Activated CD8-positive, alpha-beta T cell treated with anti-CD3 and anti-CD28 coated beads for 36 hours (primary cell): ENCODE measurements at regions of chr3 and their contacts with region 1.

Region 1: DNA sequence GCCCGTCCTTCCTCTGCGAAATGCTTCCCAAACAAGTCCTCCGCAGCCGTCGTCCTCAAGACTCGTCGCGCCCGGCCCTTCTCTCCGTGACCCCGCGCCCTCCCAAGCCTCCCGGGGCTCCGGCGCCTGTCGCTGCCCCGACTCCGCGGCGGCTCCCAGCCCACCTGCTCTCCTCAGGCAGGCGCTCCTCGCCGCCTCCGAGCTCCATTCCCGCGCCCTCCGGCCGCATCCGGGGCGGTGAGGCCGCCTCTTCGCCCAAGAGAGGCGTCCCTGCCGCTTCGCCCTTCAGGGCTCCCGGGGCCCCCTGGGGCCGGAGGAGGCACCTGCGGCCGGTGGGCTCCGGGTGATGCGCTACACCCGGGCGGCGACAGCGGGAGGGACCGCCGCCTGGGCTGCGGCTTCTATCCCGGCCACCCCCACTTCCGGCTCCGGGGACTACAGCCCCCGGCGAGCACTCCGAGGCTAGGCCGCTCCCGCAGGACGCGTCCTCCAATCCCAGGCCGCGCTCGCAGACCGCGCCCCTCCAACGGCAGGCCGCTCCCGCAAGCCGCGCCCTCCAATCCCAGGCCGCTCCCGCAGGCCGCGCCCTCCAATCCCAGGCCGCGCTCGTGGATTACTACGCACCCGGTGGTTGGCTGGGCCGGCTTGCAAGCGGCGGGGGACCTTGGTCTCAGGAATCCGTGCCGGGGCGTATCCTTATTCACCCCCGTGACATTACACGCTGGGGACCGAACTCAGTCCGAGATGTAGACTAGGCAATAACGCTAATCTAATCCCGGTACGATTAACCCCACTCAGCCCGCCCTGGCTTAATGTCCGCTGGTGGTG is at the start of gene RUBCN:
- DNase-seq: peak; percentile 96
- ATAC-seq: peak; percentile 97
- H3K4me3 Mint-ChIP-seq: peak within 1 kb of the TSS; percentile 82
- H3K27ac Mint-ChIP-seq: peak within 1 kb of the TSS; percentile 92
- H3K4me1 Mint-ChIP-seq: peaks cover 37% of the 10 kb centered on the region
- H3K27me3 Mint-ChIP-seq: no peaks in the 10 kb centered on the region
- CTCF ChIP-seq: no peak
- total RNA-seq, gene RUBCN: 27.3 to 27.7 TPM

Region 2: DNA sequence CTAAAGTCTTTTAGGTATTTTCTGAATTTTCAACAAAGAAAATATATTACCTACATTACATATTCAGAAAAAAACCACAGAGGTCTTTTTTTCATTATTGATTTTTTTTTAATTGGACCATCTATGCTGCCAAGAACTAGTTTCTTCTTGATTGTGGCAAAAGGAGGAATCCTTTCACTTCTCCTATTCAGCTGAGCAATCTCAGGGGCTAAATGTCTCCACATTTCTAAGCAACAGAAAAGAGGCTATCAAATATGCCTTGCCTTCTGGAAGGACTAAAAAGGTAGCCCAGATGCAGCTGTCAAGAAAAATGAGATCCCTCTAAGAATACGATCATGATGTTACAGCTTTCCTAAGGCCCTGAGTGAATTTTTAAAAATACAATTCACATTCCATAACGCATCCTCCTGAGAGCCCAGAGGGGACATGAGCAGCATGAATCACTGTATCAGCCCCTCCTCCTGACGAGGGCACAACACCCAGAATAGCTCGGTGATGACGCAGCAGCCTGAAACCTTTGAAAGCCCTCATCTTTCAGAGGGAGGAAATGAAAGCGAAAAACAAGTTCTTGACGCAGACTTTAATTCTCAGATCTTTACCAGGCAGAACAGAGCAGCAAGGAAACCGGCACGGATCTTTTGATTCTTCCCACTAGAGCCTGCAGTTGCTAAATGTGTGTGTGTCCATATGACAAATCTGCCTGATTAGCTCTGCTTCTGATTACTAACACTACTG is 24.6 kb before region 1 on chr3:
- CTCF ChIA-PET with region 1: interaction called, 3 read pairs
- POLR2A ChIA-PET with region 1: interaction called, 16 read pairs
- intact Hi-C with region 1: no loop called
- DNase-seq: peak; percentile 95
- ATAC-seq: peak; percentile 99
- H3K4me3 Mint-ChIP-seq: peak overlapping the region; percentile 68
- H3K27ac Mint-ChIP-seq: peak overlapping the region; percentile 95
- H3K4me1 Mint-ChIP-seq: peaks cover 27% of the 10 kb centered on the region
- H3K27me3 Mint-ChIP-seq: no peaks in the 10 kb centered on the region
- CTCF ChIP-seq: no peak